PC-3 (cell line): ENCODE measurements at regions of chr10 and their contacts with region 1.

Region 1: GRCh38 chr10:110311357-110311949 is 6.7 kb upstream of the SMNDC1 start:
- DNase-seq: peak; percentile 76
- ATAC-seq: peak; percentile 65
- H3K4me3 ChIP-seq: no peak overlapping the region
- H3K27ac ChIP-seq: peak overlapping the region; percentile 35
- H3K4me1 ChIP-seq: peaks cover 27% of the 10 kb centered on the region
- H3K27me3 ChIP-seq: no peaks in the 10 kb centered on the region
- CTCF ChIP-seq: peak; percentile 73

Region 2: DNA sequence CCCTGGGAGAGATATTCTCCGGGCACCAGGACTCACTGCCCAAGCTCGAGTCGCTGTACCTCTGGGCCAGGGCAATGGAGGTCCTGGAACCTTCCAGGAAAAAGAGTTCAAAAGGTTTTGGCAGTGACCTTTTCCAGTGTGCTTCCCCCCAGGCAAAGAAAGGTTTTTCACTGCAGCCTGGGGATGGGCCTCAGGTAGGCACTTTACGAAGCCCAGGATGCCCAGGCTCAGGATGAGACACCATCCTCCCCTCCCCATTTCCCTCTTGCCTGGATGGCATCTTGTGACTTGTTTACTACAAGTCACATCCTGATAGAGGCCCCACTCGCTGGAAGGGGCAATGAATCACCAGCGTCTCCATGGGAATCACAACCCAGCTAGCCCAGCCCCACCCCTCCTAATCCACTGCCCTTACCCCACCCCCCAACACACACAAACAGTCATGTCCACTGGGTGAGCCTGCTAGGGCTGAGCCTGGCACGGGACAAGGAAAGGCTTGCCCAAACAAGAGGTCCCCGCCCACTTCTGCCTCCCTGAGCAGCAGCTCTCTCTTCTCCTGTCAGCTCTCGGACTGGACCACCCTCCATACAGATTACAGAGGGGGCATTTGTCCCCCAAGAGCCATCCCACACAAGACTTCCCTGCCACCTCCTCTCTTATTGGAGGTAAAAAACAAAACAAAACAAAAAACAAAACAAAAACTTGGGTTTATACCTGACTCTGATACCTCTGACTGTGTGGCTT is 87.1 kb after region 1 on chr10:
- CTCF ChIA-PET with region 1: no interaction called
- POLR2A ChIA-PET with region 1: interaction called, 3 read pairs
- intact Hi-C with region 1: loop called (anchors 2 kb)
- DNase-seq: peak; percentile 96
- ATAC-seq: peak; percentile 82
- H3K4me3 ChIP-seq: peak overlapping the region; percentile 41
- H3K27ac ChIP-seq: peak overlapping the region; percentile 98
- H3K4me1 ChIP-seq: peaks cover 52% of the 10 kb centered on the region
- H3K27me3 ChIP-seq: no peaks in the 10 kb centered on the region
- CTCF ChIP-seq: no peak